Activated CD4-positive, alpha-beta memory T cell treated with anti-CD3 and anti-CD28 coated beads, Interleukin-2, amount 10 ng/mL, durations not matched to agents 7 days and 5 days (primary cell): ENCODE measurements at regions of chr4 and their contacts with region 1.

Region 1: GRCh38 chr4:87848622-87849351 is 16.0 kb downstream of the MEPE start:
- DNase-seq: peak; percentile 45
- H3K4me3 Mint-ChIP-seq: no peak overlapping the region
- H3K27ac Mint-ChIP-seq: no peak overlapping the region
- H3K4me1 Mint-ChIP-seq: peaks cover 13% of the 10 kb centered on the region
- H3K27me3 Mint-ChIP-seq: peaks cover 38% of the 10 kb centered on the region

Region 2: GRCh38 chr4:87679449-87680169 is 169.2 kb before region 1 on chr4:
- CTCF ChIA-PET with region 1: interaction called, 13 read pairs
- POLR2A ChIA-PET with region 1: interaction called, 4 read pairs
- DNase-seq: peak; percentile 18
- H3K4me3 Mint-ChIP-seq: no peak overlapping the region
- H3K27ac Mint-ChIP-seq: no peak overlapping the region
- H3K4me1 Mint-ChIP-seq: no peaks in the 10 kb centered on the region
- H3K27me3 Mint-ChIP-seq: peaks cover 5% of the 10 kb centered on the region

Region 3: GRCh38 chr4:87985097-87985886 is 136.5 kb after region 1 on chr4:
- CTCF ChIA-PET with region 1: interaction called, 11 read pairs
- POLR2A ChIA-PET with region 1: no interaction called
- DNase-seq: peak; percentile 57
- H3K4me3 Mint-ChIP-seq: no peak overlapping the region
- H3K27ac Mint-ChIP-seq: no peak overlapping the region
- H3K4me1 Mint-ChIP-seq: peaks cover 10% of the 10 kb centered on the region
- H3K27me3 Mint-ChIP-seq: peaks cover 27% of the 10 kb centered on the region